AG04449 (cell line): ENCODE measurements at regions of chr17 and their contacts with region 1.

Region 1: DNA sequence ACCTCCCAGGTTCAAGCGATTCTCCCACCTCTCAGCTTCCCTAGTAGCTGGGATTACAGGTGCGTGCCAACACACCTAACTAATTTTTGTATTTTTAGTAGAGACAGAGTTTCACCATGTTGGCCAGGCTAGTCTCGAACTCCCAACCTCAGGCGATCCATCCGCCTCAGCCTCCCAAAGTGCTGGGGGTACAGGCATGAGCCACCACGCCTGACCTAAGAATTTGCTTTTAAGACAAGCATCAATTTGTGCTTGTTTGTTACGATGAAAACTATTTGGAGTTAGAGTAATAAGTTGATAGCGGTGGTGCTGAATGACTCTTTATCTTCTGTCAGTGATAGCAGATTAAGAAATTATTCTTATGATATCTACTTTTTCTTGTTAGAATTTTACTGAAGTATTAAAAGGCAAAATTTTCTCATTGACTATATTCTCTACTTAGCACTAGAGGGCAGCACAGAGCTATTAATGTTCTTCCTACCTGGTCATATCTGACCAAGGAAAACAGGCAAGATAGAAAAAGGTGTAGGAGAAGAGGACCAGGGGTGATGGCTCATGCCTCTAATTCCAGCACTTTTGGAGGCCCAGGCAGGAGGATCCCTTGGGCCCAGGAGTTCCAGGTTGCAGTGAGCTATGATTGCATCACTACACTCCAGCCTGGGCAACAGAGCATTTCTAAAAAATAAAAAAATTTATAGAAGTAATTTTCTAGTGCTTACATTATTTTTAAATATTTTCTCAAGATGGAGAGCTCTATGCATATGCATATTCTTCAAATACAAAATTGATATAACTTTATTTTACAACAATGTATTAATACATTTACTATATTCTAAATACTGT is 24.5 kb downstream of the STXBP4 start:
- DNase-seq: no peak
- H3K4me3 ChIP-seq: no peak overlapping the region
- CTCF ChIP-seq: peak; percentile 30

Region 2: GRCh38 chr17:54814419-54814818 is 178.6 kb before region 1 on chr17:
- CTCF ChIA-PET with region 1: no interaction called
- POLR2A ChIA-PET with region 1: no interaction called
- DNase-seq: no peak
- H3K4me3 ChIP-seq: no peak overlapping the region
- CTCF ChIP-seq: no peak

Region 3: DNA sequence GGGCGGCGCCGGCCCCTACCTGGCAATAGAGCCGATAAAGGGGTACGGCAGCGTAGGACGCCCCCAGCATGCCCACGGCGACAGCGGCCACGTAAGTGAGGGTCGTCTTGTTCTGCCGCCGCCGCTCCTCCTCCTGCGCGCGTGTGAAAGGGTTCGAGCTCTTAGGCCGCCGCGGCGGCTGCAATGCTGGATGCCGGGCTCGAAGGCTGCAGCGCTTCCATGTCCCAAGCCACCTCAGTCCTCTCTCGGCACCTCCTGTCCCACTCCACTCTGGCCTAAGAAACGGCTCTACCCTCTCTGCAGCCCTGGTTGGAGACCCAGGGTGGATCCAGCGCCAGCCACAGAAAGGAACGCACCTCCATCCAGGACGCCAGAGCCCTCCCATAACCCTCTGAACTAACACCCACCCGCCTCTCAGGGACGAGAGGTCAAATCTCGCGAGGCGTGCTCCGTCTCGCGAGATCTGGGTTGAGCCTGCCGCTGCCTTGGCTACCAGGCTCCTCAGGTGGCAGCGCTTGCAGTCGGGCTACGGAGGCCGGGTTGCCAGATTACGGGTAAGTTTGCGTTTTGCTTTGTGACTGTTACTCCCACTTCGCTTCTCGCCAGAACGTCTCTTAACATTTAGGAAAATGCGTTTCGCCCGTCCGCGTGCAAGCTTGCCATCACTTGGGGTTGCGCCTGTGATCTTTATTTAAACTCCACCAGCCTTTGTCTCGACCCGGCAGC is 24.6 kb before region 1 on chr17 and contains the starts of genes COX11 and STXBP4:
- CTCF ChIA-PET with region 1: interaction called, 22 read pairs
- POLR2A ChIA-PET with region 1: no interaction called
- DNase-seq: peak; percentile 75
- H3K4me3 ChIP-seq: peak within 1 kb of the TSS; percentile 93
- CTCF ChIP-seq: peak; percentile 35

Region 4: GRCh38 chr17:54982399-54982798 is 10.6 kb before region 1 on chr17:
- CTCF ChIA-PET with region 1: interaction called, 19 read pairs
- POLR2A ChIA-PET with region 1: no interaction called
- DNase-seq: peak; percentile 53
- H3K4me3 ChIP-seq: no peak overlapping the region
- CTCF ChIP-seq: no peak

Region 5: DNA sequence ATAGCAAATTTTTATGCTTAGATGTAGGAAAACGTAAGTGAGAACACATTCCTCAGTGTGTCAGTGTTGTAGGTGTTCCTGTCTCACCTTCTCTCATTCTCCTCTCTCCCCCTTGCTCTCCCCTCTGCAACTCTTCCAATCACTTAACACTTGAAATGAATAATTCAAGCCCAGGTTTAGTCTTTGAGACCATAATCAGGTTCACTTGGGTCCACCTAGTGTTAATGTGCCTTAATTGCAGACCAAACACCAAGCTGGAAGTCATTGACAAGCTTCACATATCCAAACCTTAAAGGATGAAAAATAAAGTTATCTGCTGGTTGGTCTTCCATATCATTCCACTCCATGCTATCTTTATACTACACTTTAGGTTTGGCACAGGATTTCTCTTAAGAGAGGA is 12.5 kb after region 1 on chr17:
- CTCF ChIA-PET with region 1: interaction called, 104 read pairs
- POLR2A ChIA-PET with region 1: no interaction called
- DNase-seq: no peak
- H3K4me3 ChIP-seq: no peak overlapping the region
- CTCF ChIP-seq: no peak

Region 6: DNA sequence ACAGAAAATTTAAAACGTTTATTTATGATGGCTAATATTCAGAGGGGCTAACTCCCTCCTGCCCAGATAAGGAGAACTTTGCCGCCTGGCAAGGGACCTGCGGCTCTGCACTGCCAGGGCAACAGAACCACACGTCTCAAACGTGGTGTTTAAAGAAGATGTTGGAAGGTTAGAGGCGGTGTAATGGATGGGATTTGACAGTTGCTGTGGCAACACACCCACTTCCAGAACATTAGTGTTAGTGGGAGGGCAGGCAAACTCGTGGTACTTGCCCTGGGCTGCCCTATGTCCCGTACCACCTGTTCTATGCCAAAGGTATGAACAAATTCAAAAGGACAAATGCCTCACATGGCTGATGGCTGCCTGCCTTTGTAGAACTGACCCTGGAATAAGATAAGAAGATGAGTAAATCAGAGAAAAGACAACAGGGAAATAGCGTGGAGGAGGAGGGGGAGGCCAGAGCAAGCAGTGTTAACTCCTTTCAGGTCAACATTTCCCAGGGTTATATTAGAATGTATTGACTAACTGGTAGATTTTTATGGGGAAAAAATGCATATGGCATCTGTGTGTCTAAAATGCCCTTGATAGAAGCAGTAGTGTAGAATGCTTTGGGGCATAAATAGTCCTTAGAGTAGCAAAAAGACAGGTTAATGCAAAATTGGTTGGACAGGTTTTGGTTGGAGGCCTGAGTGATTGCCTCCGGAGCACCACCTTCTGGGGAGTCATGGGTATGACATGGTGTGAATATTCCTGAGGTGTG is 302.6 kb after region 1 on chr17:
- CTCF ChIA-PET with region 1: interaction called, 56 read pairs
- POLR2A ChIA-PET with region 1: no interaction called
- DNase-seq: no peak
- H3K4me3 ChIP-seq: no peak overlapping the region
- CTCF ChIP-seq: peak; percentile 80

Region 7: GRCh38 chr17:55348749-55349354 is 355.8 kb after region 1 on chr17:
- CTCF ChIA-PET with region 1: interaction called, 109 read pairs
- POLR2A ChIA-PET with region 1: no interaction called
- DNase-seq: no peak
- H3K4me3 ChIP-seq: no peak overlapping the region
- CTCF ChIP-seq: peak; percentile 79

Region 8: GRCh38 chr17:55356434-55357328 is 363.7 kb after region 1 on chr17:
- CTCF ChIA-PET with region 1: interaction called, 109 read pairs
- POLR2A ChIA-PET with region 1: no interaction called
- DNase-seq: no peak
- H3K4me3 ChIP-seq: no peak overlapping the region
- CTCF ChIP-seq: peak; percentile 59